Ovary (tissue), 10 donors: ENCODE measurements at regions of chr15 and their contacts with region 1.

Region 1: DNA sequence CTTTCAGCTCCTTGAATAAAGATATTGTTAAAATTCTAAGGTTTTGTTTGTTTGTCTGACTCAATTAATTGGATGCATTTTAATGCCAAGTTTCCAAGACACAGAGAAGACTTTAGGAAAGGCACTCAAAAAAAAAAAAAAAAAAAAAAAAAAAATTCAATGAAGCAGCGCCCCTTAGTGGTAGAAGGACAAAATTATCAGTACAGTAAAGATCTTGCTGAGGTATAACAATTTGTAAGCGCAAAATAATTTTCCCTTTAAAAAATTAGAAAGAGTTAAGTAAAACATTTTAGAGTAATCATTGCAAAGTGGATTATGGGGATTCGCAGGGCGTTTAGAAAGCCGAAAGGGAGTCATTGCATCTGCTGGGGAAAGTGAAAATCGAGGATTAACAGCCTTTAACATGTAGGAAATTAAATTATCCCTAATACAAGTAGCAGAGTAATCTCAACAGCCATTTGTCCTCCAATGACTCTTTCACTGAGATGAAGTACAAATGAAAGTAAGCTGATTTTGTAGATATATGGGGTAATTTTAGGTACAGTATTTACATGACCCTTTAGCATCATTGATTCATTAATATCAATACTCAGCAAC is 5.8 kb upstream of the DIS3L start:
- DNase-seq: no peak
- H3K4me3 ChIP-seq: no peak overlapping the region
- H3K27ac ChIP-seq: no peak overlapping the region
- H3K4me1 ChIP-seq: peaks cover 2% of the 10 kb centered on the region
- H3K27me3 ChIP-seq: no peaks in the 10 kb centered on the region
- CTCF ChIP-seq: peak in 1 of 3 donors; percentile 38
- EP300 ChIP-seq: no peak
- POLR2A ChIP-seq: no peak

Region 2: DNA sequence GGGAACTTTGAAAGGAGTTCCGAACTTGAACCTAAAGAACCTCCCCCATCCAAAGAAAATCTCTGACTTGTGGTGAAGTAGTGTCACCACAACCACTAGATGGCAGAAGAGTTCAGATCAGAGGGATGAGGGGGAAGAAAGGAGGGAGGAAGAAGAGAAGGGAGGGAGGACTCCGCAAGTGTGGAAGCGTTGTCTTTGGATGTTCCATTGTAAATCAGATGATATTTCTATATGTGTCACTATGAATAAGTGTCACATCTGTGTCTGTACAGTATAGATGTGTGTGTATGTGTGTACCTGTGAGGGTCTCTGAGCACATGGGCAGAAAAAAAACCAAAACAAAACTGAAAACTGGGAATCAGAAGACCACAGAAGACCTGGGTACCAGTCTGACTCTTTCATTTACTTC is 648.9 kb before region 1 on chr15:
- intact Hi-C with region 1: loop called in 1 of 4 experiments (anchors 10 kb)
- DNase-seq: peak in 2 of 5 donors; percentile 16 to 42
- H3K4me3 ChIP-seq: no peak overlapping the region
- H3K27ac ChIP-seq: no peak overlapping the region
- H3K4me1 ChIP-seq: no peaks in the 10 kb centered on the region
- H3K27me3 ChIP-seq: no peaks in the 10 kb centered on the region
- CTCF ChIP-seq: peak; percentile 70 to 77 (median 72)
- EP300 ChIP-seq: no peak
- POLR2A ChIP-seq: no peak

Region 3: DNA sequence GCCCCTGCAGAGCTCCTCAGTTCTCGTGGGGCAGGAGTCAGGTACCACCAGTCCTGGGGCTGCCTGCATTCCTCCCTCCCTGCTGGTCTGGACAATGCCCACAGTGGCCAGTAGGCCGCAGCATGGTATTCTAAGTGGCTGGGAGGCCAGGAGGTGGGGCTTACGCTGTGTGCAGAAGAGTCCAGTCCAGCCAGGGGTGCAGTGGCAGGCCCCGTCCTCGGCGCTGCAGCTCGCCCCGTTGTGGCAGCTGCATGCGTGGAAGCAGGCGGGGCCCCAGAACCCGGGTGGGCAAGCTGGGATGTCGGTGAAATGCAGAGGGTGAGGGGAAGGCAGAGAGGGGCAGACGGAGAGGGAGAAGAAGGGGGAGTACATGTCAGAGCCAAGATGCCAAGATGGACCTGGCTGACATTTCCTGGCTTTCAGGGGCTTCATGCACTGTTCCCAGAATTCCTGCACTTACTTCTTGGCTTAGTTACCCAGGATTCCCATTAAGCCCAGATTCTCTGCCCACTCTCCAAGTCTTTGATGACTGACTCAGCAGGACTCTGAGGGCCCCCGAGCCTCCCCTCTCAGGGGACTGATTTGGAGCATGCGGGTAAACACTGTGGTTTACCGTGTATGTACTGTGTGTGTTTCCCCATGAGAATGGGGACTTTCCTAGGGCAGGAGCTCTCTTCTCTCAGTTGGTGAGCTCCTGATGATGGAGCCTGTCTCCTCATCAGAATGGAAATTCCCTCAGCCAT is 370.7 kb before region 1 on chr15:
- intact Hi-C with region 1: loop called in 2 of 4 experiments (anchors 5 to 10 kb)
- DNase-seq: peak; percentile 48 to 75 (median 69)
- H3K4me3 ChIP-seq: no peak overlapping the region
- H3K27ac ChIP-seq: no peak overlapping the region
- H3K4me1 ChIP-seq: peaks cover 8% of the 10 kb centered on the region
- H3K27me3 ChIP-seq: no peaks in the 10 kb centered on the region
- CTCF ChIP-seq: peak; percentile 33 to 75 (median 35)
- EP300 ChIP-seq: no peak
- POLR2A ChIP-seq: no peak

Region 4: GRCh38 chr15:65980824-65981456 is 306.6 kb before region 1 on chr15:
- intact Hi-C with region 1: loop called in 2 of 4 experiments (anchors 5 to 10 kb)
- DNase-seq: peak; percentile 45 to 82 (median 51)
- H3K4me3 ChIP-seq: no peak overlapping the region
- H3K27ac ChIP-seq: no peak overlapping the region
- H3K4me1 ChIP-seq: no peaks in the 10 kb centered on the region
- H3K27me3 ChIP-seq: no peaks in the 10 kb centered on the region
- CTCF ChIP-seq: peak in 1 of 3 donors; percentile 69
- EP300 ChIP-seq: no peak
- POLR2A ChIP-seq: no peak

Region 5: GRCh38 chr15:66251790-66252684 is 35.5 kb before region 1 on chr15:
- intact Hi-C with region 1: loop called in 1 of 4 experiments (anchors 2 kb)
- DNase-seq: peak; percentile 25 to 75 (median 53)
- H3K4me3 ChIP-seq: peak overlapping the region; percentile 48
- H3K27ac ChIP-seq: no peak overlapping the region
- H3K4me1 ChIP-seq: peaks cover 5% of the 10 kb centered on the region
- H3K27me3 ChIP-seq: no peaks in the 10 kb centered on the region
- CTCF ChIP-seq: peak; percentile 28 to 41 (median 36)
- EP300 ChIP-seq: no peak
- POLR2A ChIP-seq: no peak